ENCODE measurements at regions of chr18 and their contacts with region 1.

Region 1: GRCh38 chr18:2932247-2933181 is 80.4 kb downstream of the LPIN2 start:
- DNase-seq: no peak
- H3K4me3 ChIP-seq: no peak overlapping the region
- H3K27ac ChIP-seq: no peak overlapping the region
- H3K4me1 ChIP-seq: no peaks in the 10 kb centered on the region
- H3K27me3 ChIP-seq: no peaks in the 10 kb centered on the region
- CTCF ChIP-seq: peak; percentile 40 to 85 (median 57)
- POLR2A ChIP-seq: no peak

Region 2: DNA sequence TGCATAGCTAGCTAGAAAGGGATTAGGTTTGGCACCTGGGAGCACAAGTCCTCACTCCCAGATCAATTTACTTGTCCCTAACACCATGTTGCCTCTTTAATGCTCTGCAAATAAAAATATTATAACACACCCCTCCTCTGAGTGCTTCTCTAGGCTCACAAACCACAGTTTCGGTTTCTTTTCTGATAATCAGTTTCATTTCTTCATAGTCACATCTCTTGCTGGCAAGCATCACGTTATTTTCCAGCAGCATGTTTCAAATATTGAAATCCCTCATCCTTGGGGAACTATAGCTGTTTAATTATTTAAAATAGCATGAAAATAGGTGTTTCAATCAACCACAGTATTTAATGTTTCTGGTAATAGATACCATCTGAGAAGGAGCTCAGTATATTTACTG is 290.9 kb before region 1 on chr18:
- intact Hi-C with region 1: no loop called
- DNase-seq: no peak
- H3K4me3 ChIP-seq: peak overlapping the region in 1 of 2 donors; percentile 26
- H3K27ac ChIP-seq: peak overlapping the region; percentile 51
- H3K4me1 ChIP-seq: peaks cover 12% of the 10 kb centered on the region
- H3K27me3 ChIP-seq: no peaks in the 10 kb centered on the region
- CTCF ChIP-seq: no peak
- POLR2A ChIP-seq: no peak

Region 3: GRCh38 chr18:3052411-3052758 is 119.9 kb after region 1 on chr18:
- intact Hi-C with region 1: no loop called
- DNase-seq: no peak
- H3K4me3 ChIP-seq: no peak overlapping the region
- H3K27ac ChIP-seq: no peak overlapping the region
- H3K4me1 ChIP-seq: no peaks in the 10 kb centered on the region
- H3K27me3 ChIP-seq: no peaks in the 10 kb centered on the region
- CTCF ChIP-seq: no peak
- POLR2A ChIP-seq: no peak

Region 4: GRCh38 chr18:3062798-3063680 is 130.5 kb after region 1 on chr18:
- intact Hi-C with region 1: loop called (anchors 5 kb)
- DNase-seq: no peak
- H3K4me3 ChIP-seq: no peak overlapping the region
- H3K27ac ChIP-seq: no peak overlapping the region
- H3K4me1 ChIP-seq: no peaks in the 10 kb centered on the region
- H3K27me3 ChIP-seq: no peaks in the 10 kb centered on the region
- CTCF ChIP-seq: peak; percentile 40 to 70 (median 67)
- POLR2A ChIP-seq: no peak

Region 5: DNA sequence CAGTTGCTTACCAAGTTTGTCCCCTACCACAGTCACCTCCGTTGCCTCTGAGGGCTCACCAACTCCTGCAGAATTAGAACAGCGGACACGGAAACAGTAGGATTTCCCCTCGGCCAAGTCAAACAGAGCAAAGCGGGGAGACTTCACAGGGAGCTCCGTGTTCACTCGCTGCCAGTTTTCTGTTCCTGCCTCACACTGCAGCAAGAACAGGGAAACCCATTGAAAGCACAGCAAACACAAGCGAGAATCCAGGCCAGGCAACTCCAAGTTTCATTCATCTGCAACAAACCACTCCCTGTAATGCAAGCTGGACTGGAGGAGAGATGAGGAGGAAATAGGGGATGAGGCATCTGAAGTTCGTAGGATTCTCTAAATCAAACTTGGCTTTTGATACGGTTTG is 203.0 kb after region 1 on chr18:
- intact Hi-C with region 1: loop called (anchors 10 kb)
- DNase-seq: no peak
- H3K4me3 ChIP-seq: no peak overlapping the region
- H3K27ac ChIP-seq: no peak overlapping the region
- H3K4me1 ChIP-seq: no peaks in the 10 kb centered on the region
- H3K27me3 ChIP-seq: no peaks in the 10 kb centered on the region
- CTCF ChIP-seq: no peak
- POLR2A ChIP-seq: no peak

Region 6: GRCh38 chr18:3245853-3246634 is 313.5 kb after region 1 on chr18:
- intact Hi-C with region 1: loop called (anchors 10 kb)
- DNase-seq: peak in 1 of 2 donors; percentile 95
- H3K4me3 ChIP-seq: peak overlapping the region; percentile 93 to 98
- H3K27ac ChIP-seq: peak overlapping the region; percentile 98
- H3K4me1 ChIP-seq: peaks cover 39% of the 10 kb centered on the region
- H3K27me3 ChIP-seq: no peaks in the 10 kb centered on the region
- CTCF ChIP-seq: peak; percentile 79 to 88 (median 87)
- POLR2A ChIP-seq: no peak

Measured in vagina (tissue), 2 donors.